ENCODE measurements at regions of chr5 and their contacts with region 1.

Region 1: GRCh38 chr5:142713121-142713706 is 27.3 kb upstream of the FGF1 start:
- H3K4me3 Mint-ChIP-seq: peak overlapping the region; percentile 82
- H3K27ac Mint-ChIP-seq: peak overlapping the region; percentile 81
- H3K4me1 Mint-ChIP-seq: peaks cover 30% of the 10 kb centered on the region
- H3K27me3 Mint-ChIP-seq: peaks cover 3% of the 10 kb centered on the region

Region 2: GRCh38 chr5:142743592-142744441 is 30.6 kb after region 1 on chr5:
- intact Hi-C with region 1: no loop called
- H3K4me3 Mint-ChIP-seq: no peak overlapping the region
- H3K27ac Mint-ChIP-seq: peak overlapping the region; percentile 74
- H3K4me1 Mint-ChIP-seq: peaks cover 33% of the 10 kb centered on the region
- H3K27me3 Mint-ChIP-seq: no peaks in the 10 kb centered on the region

Region 3: DNA sequence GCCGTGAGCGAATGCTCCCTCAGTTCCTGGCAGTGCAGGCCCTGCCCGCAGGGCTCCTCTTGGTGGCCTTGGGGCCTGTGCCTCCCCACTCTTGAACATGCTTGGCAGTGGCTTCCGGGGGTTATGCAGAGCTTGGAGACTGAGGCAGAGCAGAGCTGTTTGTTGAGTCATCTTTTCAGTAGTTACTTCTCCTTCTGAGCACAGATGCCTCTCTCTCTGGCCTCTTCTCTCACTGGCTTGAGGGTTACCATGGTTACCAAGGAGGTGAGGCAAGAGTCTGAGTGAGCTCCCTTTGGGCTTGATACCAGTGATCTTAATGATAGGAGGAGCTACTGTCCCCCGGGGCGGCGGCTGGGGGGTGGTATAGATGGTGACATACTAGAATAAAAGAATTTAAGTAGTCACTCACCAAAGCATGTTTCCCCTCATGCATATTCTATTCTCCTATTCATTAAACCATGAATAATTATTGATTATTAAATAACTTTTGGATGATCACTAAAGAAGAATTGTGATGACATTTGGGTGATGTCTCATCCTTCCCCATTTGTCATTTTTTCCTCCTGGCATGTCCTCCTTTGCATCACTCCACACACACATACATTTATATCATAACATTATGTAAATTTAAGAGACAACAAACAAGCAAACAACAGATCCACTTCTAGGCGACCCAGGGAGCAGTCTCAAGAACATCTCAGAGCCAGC is 168.0 kb after region 1 on chr5:
- intact Hi-C with region 1: loop called (anchors 1 kb)
- H3K4me3 Mint-ChIP-seq: no peak overlapping the region
- H3K27ac Mint-ChIP-seq: peak overlapping the region; percentile 76
- H3K4me1 Mint-ChIP-seq: peaks cover 46% of the 10 kb centered on the region
- H3K27me3 Mint-ChIP-seq: no peaks in the 10 kb centered on the region